ENCODE measurements at regions of chr4 and their contacts with region 1.

Region 1: DNA sequence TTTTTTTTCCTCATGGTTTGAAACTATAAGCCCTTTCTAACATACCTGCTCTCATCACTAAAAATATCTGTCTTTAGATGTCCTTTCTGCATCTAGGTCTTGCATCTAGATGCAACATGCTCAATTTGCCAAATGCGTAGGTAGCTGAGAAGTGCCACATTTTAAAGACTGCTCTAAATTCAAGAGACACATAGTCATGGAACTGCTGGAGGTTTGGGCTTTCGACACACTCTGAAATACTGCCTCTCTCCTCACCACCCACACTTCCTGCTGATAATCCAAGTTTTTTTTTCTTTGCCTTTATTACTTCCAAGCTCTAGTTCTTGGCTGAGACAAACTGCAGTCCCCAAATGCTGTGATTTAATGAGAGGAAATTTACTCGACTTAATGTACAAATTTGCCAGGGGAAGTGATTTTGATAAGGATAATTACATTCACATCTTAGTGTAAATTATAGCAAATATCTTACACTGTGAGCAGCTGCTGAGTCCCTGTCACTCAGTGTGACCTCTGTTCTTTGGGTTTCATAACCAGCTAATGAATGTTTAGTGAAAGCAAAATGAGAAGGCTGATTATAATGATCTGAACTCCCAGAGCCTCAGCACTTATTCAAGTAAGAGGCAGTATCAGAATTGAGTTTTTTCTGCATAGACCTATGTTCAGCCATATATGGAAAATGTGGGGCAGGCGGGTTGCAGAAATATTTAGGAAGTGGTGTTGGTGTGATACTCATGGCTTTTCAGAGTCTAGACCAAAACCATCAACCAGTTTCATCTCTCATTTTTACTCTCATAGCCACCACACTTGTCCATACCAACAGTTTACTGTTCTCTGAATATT is 31.3 kb downstream of the DRD5 start:
- DNase-seq: no peak
- H3K4me3 Mint-ChIP-seq: no peak overlapping the region
- H3K27ac Mint-ChIP-seq: no peak overlapping the region
- H3K4me1 Mint-ChIP-seq: peaks cover 15% of the 10 kb centered on the region
- H3K27me3 Mint-ChIP-seq: peaks cover 48% of the 10 kb centered on the region

Region 2: GRCh38 chr4:9825049-9825448 is 12.3 kb after region 1 on chr4:
- intact Hi-C with region 1: loop called (anchors 1 kb)
- DNase-seq: peak; percentile 11
- H3K4me3 Mint-ChIP-seq: no peak overlapping the region
- H3K27ac Mint-ChIP-seq: no peak overlapping the region
- H3K4me1 Mint-ChIP-seq: peaks cover 17% of the 10 kb centered on the region
- H3K27me3 Mint-ChIP-seq: peaks cover 48% of the 10 kb centered on the region

Region 3: GRCh38 chr4:9999956-10000551 is 187.3 kb after region 1 on chr4:
- intact Hi-C with region 1: loop called (anchors 2 kb)
- DNase-seq: no peak
- H3K4me3 Mint-ChIP-seq: no peak overlapping the region
- H3K27ac Mint-ChIP-seq: peak overlapping the region; percentile 58
- H3K4me1 Mint-ChIP-seq: peaks cover 58% of the 10 kb centered on the region
- H3K27me3 Mint-ChIP-seq: no peaks in the 10 kb centered on the region

Region 4: GRCh38 chr4:10490996-10491395 is 678.3 kb after region 1 on chr4:
- intact Hi-C with region 1: no loop called
- DNase-seq: no peak
- H3K4me3 Mint-ChIP-seq: no peak overlapping the region
- H3K27ac Mint-ChIP-seq: no peak overlapping the region
- H3K4me1 Mint-ChIP-seq: no peaks in the 10 kb centered on the region
- H3K27me3 Mint-ChIP-seq: no peaks in the 10 kb centered on the region